Dendritic cell treated with granulocyte-macrophage colony-stimulating factor and Interleukin-4, amounts not matched to agents 40 ng/mL and 50 ng/mL, for 4 days (primary cell): ENCODE measurements at regions of chr7 and their contacts with region 1.

Region 1: DNA sequence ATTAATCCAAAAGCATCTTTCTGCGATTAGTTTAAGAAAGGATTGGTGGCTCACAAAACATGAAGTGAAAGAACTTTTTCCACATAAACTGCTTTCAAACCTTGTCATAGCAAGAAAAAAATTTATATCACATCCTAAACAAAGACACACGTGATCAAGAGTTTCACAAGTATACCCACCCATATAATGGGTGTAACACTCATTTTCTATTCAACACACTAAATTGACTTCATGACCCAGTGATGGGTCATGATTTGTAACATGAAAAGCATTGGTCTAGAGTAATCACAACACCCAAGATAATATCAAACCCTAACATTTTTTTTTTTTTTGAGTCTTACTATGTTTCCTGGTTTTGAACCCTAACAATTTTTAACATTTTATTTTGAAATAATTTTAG is 17.6 kb downstream of the PMPCB start:
- H3K4me3 Mint-ChIP-seq: no peak overlapping the region
- H3K27ac Mint-ChIP-seq: no peak overlapping the region
- H3K4me1 Mint-ChIP-seq: peaks cover 8% of the 10 kb centered on the region
- H3K27me3 Mint-ChIP-seq: no peaks in the 10 kb centered on the region

Region 2: GRCh38 chr7:103369430-103369829 is 54.6 kb after region 1 on chr7:
- intact Hi-C with region 1: loop called (anchors 5 kb)
- H3K4me3 Mint-ChIP-seq: no peak overlapping the region
- H3K27ac Mint-ChIP-seq: no peak overlapping the region
- H3K4me1 Mint-ChIP-seq: no peaks in the 10 kb centered on the region
- H3K27me3 Mint-ChIP-seq: no peaks in the 10 kb centered on the region

Region 3: GRCh38 chr7:103605640-103606039 is 290.8 kb after region 1 on chr7:
- intact Hi-C with region 1: no loop called
- H3K4me3 Mint-ChIP-seq: no peak overlapping the region
- H3K27ac Mint-ChIP-seq: no peak overlapping the region
- H3K4me1 Mint-ChIP-seq: no peaks in the 10 kb centered on the region
- H3K27me3 Mint-ChIP-seq: no peaks in the 10 kb centered on the region

Region 4: GRCh38 chr7:103704701-103705100 is 389.8 kb after region 1 on chr7:
- intact Hi-C with region 1: no loop called
- H3K4me3 Mint-ChIP-seq: no peak overlapping the region
- H3K27ac Mint-ChIP-seq: no peak overlapping the region
- H3K4me1 Mint-ChIP-seq: no peaks in the 10 kb centered on the region
- H3K27me3 Mint-ChIP-seq: no peaks in the 10 kb centered on the region